K562 (cell line): ENCODE measurements at regions of chr11 and their contacts with region 1.

Region 1: DNA sequence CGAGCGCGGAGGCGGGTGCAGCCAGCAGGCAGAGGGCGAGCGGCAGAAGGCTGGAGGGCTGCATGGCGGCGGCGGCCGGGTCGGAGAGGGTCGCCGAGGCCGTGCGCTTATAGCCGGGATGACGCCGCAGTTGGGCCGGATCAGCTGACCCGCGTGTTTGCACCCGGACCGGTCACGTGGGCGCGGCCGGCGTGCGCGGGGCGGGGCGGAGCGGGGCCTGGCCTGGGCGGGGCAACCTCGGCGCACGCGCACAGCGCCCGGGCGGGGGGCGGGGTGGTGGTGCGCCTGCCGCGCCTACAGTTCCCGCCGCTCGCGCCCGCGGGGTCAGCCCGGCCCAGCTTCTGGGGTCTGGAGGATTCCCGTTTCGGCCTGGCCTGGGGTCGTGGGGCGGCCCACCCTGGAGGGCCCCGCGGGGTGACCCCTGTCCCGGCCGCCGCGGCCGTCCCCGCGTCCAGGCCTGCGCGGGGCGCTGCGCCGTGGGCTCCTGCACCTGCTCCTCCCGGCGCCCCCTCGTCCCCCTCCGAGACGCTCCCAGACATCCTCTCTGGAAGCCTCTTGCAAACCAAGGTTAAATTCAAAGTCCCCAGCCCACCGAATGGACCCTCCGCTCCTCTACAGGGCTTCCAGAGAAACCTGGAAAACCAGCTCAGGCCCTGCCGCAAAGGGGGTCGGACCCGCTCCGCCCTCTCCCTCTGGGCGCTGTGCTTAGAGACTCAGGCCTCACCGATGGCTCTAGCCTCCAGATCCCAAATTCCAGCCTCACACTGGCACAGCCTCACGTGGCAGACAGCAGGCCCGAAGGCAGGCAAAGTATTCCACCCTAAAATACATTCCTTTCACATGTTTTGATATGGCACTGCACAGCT is at the start of gene CTSD:
- DNase-seq: peak; percentile 87 to 98 (median 98)
- ATAC-seq: peak; percentile 80
- H3K4me3 ChIP-seq: peak within 1 kb of the TSS; percentile 81
- H3K27ac ChIP-seq: peak within 1 kb of the TSS; percentile 83
- H3K4me1 ChIP-seq: peaks cover 35 to 83% of the 10 kb centered on the region in 2 experiments
- H3K27me3 ChIP-seq: no peaks in the 10 kb centered on the region
- CTCF ChIP-seq: 0 out of 6 replicates have a peak, but pooled peaks of 1 of the 3 experiments have one; percentile 23
- EP300 ChIP-seq: peak; percentile 18; the same call in 1 of the 2 replicates
- POLR2A ChIP-seq: no peak; the same call in 1 of the 2 replicates
- RAD21 ChIP-seq: no peak
- polyA plus RNA-seq, gene CTSD: 1.0 to 3.7 TPM

Region 2: DNA sequence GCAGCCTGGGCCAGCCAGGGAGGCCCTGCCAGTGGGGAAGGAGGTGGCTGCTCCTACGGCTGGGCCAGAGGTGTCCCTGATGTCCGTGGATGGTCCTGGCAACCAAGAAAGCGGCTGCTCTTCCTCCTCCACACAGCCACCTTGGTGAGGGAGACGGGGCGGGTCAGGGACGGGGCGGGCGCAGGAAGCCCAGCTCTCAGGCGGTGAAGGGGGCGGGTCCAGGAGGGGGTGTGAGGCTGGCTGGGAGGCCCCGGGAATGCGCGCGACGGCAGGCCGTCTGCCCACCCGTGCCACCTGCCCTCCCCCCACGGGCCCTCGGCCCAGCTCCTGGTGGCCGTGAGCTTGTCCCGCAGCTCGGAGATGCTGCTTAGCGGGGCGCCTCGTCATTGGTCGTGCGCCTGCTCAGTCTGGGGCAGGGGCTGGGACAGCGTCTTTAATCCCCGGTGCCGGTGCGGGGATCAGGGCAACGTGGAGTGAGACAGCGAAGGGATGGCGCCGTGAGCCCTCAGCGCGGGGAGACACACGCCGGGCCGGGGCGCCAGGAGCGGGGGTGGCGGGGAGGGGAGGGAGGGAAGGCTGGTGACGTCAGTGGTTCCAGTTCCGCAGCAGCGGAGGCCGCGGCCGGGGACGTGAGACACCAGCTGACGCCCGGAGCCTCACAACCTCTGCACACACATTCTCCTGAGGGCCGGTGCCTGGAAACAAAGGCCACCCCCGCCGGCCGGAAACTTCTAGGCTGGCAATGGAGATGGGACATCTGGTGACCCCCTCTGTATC is 381.0 kb before region 1 on chr11:
- CTCF ChIA-PET with region 1: no interaction called
- POLR2A ChIA-PET with region 1: no interaction called
- in situ Hi-C with region 1: no loop called
- intact Hi-C with region 1: no loop called
- DNase-seq: peak; percentile 65 to 72 (median 68)
- ATAC-seq: peak; percentile 90
- H3K4me3 ChIP-seq: peak overlapping the region; percentile 30
- H3K27ac ChIP-seq: no peak overlapping the region
- H3K4me1 ChIP-seq: peaks cover 0 to 14% of the 10 kb centered on the region in 2 experiments; a peak in 2 of 5 replicates
- H3K27me3 ChIP-seq: peaks cover 13 to 47% of the 10 kb centered on the region in 2 experiments; a peak in 4 of 5 replicates
- CTCF ChIP-seq: no peak
- EP300 ChIP-seq: no peak
- POLR2A ChIP-seq: no peak
- RAD21 ChIP-seq: no peak

Region 3: DNA sequence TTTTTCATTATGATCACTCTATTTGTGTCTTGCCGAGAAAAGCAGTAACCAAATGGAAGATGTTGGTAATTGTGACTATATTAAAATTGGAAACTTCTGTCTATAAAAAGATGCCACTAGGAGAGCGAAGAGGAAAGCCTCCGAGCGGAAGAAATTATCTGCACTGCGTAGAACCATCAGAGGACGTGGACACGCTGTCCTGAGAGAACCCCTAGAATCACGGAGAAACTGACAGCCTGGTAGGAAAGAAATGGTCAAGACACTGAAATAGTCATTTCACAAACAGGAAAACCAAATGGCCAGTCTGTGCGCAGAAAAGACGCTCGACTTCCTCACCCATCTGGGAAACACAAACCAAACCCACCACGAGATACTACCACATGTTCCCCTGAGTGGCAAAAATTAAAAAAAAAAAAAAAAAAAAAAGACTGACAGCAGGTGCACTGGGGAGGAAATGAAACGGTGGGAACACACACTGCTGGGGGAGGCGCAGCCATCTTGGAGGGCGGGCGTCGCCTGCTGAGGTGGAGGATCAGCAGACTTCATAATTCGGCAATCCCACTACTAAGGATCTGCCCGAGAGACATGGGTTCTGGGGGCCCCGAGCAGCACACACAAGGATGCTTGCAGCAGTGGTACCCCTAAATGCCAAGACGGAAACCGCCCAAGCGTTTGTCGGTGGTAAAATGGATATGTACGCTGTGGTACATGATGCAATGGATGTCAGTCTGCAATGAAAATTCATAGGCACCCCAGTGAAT is 34.9 kb before region 1 on chr11:
- CTCF ChIA-PET with region 1: no interaction called
- POLR2A ChIA-PET with region 1: no interaction called
- in situ Hi-C with region 1: loop called (anchors 5 kb)
- intact Hi-C with region 1: no loop called
- DNase-seq: peak in 1 of 4 experiments; percentile 10
- ATAC-seq: peak; percentile 73
- H3K4me3 ChIP-seq: no peak overlapping the region
- H3K27ac ChIP-seq: no peak overlapping the region
- H3K4me1 ChIP-seq: no peaks in the 10 kb centered on the region; a peak in 2 of 5 replicates
- H3K27me3 ChIP-seq: peaks cover 24 to 61% of the 10 kb centered on the region in 2 experiments
- CTCF ChIP-seq: no peak
- EP300 ChIP-seq: no peak
- POLR2A ChIP-seq: no peak
- RAD21 ChIP-seq: no peak